Activated CD8-positive, alpha-beta T cell treated with anti-CD3 and anti-CD28 coated beads, Interleukin-2, amount 10 ng/mL, durations not matched to agents 7 days and 5 days (primary cell): ENCODE measurements at regions of chr1 and their contacts with region 1.

Region 1: GRCh38 chr1:44759077-44759476 is 16.3 kb upstream of the RPS8 start:
- DNase-seq: no peak
- ATAC-seq: no peak
- H3K4me3 Mint-ChIP-seq: no peak overlapping the region
- H3K27ac Mint-ChIP-seq: no peak overlapping the region
- H3K4me1 Mint-ChIP-seq: peaks cover 20% of the 10 kb centered on the region
- H3K27me3 Mint-ChIP-seq: no peaks in the 10 kb centered on the region

Region 2: DNA sequence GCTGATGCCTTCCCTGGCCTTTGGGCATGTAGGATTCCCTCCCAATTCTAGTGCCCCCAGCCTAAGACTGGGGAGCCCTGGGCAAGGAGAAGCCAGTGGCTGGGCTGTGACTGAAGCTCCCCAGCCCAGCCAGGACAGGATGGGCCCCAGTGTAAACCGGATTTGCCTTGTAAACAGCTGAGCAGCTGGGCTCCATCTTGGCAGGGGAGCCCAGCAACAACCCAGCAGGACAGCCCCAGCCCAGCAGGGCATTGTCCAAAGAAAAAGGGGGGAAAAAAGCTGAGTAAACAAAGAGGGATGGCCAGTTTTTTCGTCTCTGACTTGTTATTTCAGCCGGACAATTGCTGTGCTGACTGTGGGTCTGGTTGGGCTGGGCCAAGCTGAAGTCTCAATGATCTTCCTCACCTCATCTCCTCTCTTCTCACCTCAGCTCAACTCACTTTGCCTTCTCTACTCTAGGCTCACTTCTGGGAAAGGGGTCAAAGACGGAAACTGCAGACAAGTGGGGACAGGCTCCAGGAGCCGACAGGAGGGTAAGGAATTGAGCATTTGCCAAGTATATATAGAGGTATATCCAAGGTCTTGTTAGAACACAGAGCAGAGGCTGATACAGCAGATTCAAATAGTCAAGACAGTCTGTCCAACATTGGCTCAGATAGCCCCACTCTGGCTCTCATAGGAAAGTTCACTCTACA is 182.5 kb before region 1 on chr1:
- CTCF ChIA-PET with region 1: no interaction called
- POLR2A ChIA-PET with region 1: no interaction called
- DNase-seq: no peak
- ATAC-seq: no peak
- H3K4me3 Mint-ChIP-seq: no peak overlapping the region
- H3K27ac Mint-ChIP-seq: no peak overlapping the region
- H3K4me1 Mint-ChIP-seq: no peaks in the 10 kb centered on the region
- H3K27me3 Mint-ChIP-seq: peaks cover 14% of the 10 kb centered on the region

Region 3: DNA sequence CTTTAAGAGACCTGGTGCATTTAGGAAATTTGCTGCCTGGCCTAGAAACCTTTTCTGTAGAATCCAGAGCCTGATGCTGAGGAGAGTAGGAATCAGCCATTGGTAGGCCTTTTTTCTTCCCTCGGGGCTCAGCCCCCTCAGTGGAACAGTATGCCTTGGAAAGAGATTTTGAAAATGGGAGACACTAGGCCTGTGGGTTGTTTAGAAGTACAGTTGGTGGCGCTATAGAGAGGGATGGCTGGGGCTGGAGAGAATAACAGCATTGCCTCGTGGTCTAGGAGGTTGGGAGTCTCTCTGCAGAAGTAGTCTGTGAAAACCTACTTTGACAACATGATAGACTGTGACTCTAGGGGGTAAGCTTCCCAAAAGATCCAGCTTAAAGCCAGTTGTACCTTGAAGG is 11.2 kb before region 1 on chr1:
- CTCF ChIA-PET with region 1: interaction called, 3 read pairs
- POLR2A ChIA-PET with region 1: interaction called, 11 read pairs
- DNase-seq: no peak
- ATAC-seq: no peak
- H3K4me3 Mint-ChIP-seq: no peak overlapping the region
- H3K27ac Mint-ChIP-seq: no peak overlapping the region
- H3K4me1 Mint-ChIP-seq: peaks cover 32% of the 10 kb centered on the region
- H3K27me3 Mint-ChIP-seq: no peaks in the 10 kb centered on the region